Heart right ventricle (tissue), 16 donors: ENCODE measurements at regions of chr10 and their contacts with region 1.

Region 1: GRCh38 chr10:122565728-122566206 is 5.2 kb downstream of the DMBT1 start:
- DNase-seq: peak; percentile 77 to 82
- ATAC-seq: peak; percentile 32 to 66 (median 61)
- H3K4me3 ChIP-seq: peak overlapping the region in 5 of 10 donors; percentile 12 to 34 (median 30)
- H3K27ac ChIP-seq: no peak overlapping the region
- H3K4me1 ChIP-seq: peaks cover 0 to 6% (median 0%) of the 10 kb centered on the region in 9 donors
- H3K27me3 ChIP-seq: peaks cover 0 to 28% (median 9%) of the 10 kb centered on the region in 7 donors
- CTCF ChIP-seq: peak; percentile 80 to 92 (median 84)

Region 2: DNA sequence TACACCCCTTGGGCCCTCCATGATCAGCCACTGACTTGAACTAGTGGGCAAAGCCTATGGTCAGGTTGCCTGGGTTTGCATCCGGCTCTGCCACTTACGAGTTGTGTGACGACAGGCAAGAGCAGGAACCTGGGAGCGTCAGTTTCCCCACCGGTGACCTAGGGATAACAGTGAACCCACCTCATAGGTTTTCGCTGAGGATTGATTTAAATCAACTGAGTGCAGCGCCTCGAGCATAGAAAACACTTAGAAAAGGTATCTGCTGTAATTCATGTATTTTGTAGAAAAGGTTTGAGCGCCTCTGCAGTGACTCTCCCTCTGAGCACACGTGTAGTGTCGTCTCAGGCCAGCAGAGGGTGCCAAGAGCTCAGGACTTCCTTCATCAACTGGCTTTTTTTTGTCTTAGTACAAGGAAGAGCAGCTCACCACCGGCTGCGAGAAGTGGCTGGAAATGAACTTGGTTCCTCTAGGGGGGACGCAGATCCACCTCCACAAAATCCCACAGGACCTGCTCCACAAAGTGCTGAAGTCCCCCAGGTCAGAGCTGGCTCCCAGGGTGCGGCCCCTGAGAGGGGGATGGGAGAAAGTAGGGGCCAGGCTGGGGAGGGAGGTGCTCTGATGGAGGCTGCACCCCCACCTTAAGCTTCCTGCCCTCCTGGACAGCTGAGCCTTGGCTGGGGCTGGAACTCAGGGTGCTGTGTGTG is 267.0 kb before region 1 on chr10:
- intact Hi-C with region 1: loop called (anchors 1 to 5 kb)
- DNase-seq: peak; percentile 70 to 72
- ATAC-seq: peak; percentile 77 to 92 (median 89)
- H3K4me3 ChIP-seq: peak overlapping the region in 4 of 10 donors; percentile 2 to 25 (median 14)
- H3K27ac ChIP-seq: no peak overlapping the region
- H3K4me1 ChIP-seq: peaks cover 0 to 14% (median 6%) of the 10 kb centered on the region in 9 donors
- H3K27me3 ChIP-seq: no peaks in the 10 kb centered on the region
- CTCF ChIP-seq: peak; percentile 84 to 96 (median 92)

Region 3: GRCh38 chr10:122342293-122343134 is 223.3 kb before region 1 on chr10:
- intact Hi-C with region 1: loop called in 8 of 10 experiments (anchors 1 to 5 kb)
- DNase-seq: peak in 1 of 2 donors; percentile 61
- ATAC-seq: peak in 6 of 8 donors; percentile 19 to 66 (median 48)
- H3K4me3 ChIP-seq: no peak overlapping the region
- H3K27ac ChIP-seq: peak overlapping the region in 7 of 10 donors; percentile 40 to 80 (median 66)
- H3K4me1 ChIP-seq: peaks cover 2 to 41% (median 16%) of the 10 kb centered on the region in 9 donors
- H3K27me3 ChIP-seq: no peaks in the 10 kb centered on the region
- CTCF ChIP-seq: peak; percentile 64 to 87 (median 84)

Region 4: DNA sequence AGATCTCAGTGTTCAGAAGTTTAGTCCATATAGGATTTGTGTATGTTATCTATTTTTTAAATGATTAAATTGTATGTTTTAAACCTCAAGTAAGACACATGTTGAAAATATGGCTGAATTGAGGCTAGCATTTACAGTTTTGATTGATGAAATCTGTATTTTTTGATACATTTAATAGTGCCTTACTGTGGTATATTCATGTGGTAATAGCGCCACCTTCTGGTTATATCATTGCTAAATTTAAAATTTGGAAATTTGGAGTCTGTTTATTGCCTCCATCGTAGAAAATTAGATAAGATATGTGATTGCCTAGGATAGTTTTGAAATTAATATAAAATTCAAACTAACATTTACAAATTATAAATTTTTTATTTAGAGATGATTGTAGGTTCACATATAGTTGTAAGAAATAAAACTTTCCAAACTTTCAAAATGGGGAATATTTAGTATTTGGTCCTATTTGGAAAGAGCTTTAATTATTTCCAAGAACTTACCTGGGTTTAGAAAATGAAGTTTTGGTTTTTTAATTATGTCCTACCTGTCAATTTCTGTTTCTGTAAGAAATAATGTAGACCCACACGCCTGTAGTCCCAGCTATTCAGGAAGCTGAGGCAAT is 130.4 kb before region 1 on chr10:
- intact Hi-C with region 1: loop called in 8 of 10 experiments (anchors 1 to 5 kb)
- DNase-seq: no peak
- ATAC-seq: peak in 1 of 8 donors; percentile 43
- H3K4me3 ChIP-seq: no peak overlapping the region
- H3K27ac ChIP-seq: no peak overlapping the region
- H3K4me1 ChIP-seq: no peaks in the 10 kb centered on the region
- H3K27me3 ChIP-seq: no peaks in the 10 kb centered on the region
- CTCF ChIP-seq: peak; percentile 47 to 89 (median 70)

Region 5: DNA sequence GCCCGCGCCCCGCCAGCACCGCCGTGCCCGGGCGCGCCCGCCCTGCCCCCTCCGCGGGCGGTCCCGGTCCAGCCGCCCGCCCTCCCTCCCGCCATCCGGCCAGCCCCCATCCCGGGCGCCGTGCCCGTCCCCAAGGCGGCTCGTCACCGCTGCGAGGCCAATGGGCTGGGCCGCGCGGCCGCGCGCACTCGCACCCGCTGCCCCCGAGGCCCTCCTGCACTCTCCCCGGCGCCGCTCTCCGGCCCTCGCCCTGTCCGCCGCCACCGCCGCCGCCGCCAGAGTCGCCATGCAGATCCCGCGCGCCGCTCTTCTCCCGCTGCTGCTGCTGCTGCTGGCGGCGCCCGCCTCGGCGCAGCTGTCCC is 104.4 kb before region 1 on chr10 and contains the start of gene HTRA1:
- intact Hi-C with region 1: loop called in 2 of 10 experiments (anchors 5 to 10 kb)
- DNase-seq: peak; percentile 83 to 86
- ATAC-seq: peak; percentile 73 to 89 (median 82)
- H3K4me3 ChIP-seq: peak within 1 kb of the TSS; percentile 47 to 87 (median 78)
- H3K27ac ChIP-seq: peak within 1 kb of the TSS; percentile 51 to 89 (median 77)
- H3K4me1 ChIP-seq: peaks cover 13 to 59% (median 38%) of the 10 kb centered on the region in 9 donors
- H3K27me3 ChIP-seq: peaks cover 0 to 73% (median 0%) of the 10 kb centered on the region in 7 donors
- CTCF ChIP-seq: no peak
- total RNA-seq, gene HTRA1: 23.4 to 108 (median 73.1) TPM

Region 6: DNA sequence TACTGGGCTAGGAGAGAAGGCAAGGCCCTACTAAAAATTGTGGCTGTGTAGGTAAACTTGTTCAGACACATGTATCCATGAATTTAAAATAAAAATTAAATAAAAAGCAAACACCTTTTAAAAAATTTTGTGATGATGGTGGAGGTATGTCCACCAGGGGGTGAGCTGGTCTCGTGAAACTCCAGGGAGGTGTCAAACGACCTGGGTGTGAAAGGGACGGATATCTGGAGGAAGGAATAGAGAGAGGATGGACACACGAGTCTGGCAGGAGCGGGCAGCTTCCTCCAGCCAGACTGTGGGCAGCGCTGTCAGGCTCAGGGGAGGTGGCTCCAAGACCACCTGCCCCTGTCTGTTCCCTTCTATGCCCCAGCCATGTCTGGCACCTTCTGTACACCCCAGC is 40.0 kb before region 1 on chr10:
- intact Hi-C with region 1: loop called in 3 of 10 experiments (anchors 2 to 5 kb)
- DNase-seq: no peak
- ATAC-seq: no peak
- H3K4me3 ChIP-seq: no peak overlapping the region
- H3K27ac ChIP-seq: no peak overlapping the region
- H3K4me1 ChIP-seq: peaks cover 0 to 20% (median 5%) of the 10 kb centered on the region in 9 donors
- H3K27me3 ChIP-seq: no peaks in the 10 kb centered on the region
- CTCF ChIP-seq: peak in 8 of 9 donors; percentile 12 to 52 (median 30)

Region 7: DNA sequence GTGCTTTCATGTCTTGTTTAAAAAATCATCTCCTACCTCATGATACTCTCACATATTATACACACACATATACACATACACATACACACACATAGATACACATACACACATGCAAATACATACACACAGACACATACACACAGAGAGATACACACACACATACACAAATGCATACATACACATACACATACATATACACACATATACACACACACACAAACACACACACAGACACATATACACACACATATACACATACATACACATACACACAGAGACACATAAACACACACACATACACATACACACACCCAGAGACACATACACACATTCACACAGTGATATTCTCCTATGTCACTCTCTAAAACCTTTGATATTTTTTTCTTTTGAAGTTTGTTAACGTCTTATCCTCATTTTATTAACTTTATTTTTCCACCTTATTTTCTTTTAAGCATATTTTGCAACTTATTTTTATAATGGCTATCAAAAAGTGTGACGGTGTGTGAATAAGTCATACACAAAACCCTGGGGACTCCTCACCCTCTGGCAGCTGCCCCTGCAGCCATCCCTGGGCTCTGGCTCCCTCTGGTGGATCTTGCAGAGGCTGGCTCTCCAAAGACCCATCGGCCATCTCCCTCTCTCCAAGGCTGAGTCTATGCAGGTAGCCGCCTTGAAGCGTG is 137.8 kb after region 1 on chr10:
- intact Hi-C with region 1: loop called in 8 of 10 experiments (anchors 2 to 10 kb)
- DNase-seq: peak; percentile 71 to 74
- ATAC-seq: peak; percentile 80 to 93 (median 91)
- H3K4me3 ChIP-seq: no peak overlapping the region
- H3K27ac ChIP-seq: no peak overlapping the region
- H3K4me1 ChIP-seq: peaks cover 0 to 13% (median 6%) of the 10 kb centered on the region in 9 donors
- H3K27me3 ChIP-seq: no peaks in the 10 kb centered on the region
- CTCF ChIP-seq: peak; percentile 76 to 93 (median 86)